ENCODE measurements at regions of chr11 and their contacts with region 1.

Region 1: DNA sequence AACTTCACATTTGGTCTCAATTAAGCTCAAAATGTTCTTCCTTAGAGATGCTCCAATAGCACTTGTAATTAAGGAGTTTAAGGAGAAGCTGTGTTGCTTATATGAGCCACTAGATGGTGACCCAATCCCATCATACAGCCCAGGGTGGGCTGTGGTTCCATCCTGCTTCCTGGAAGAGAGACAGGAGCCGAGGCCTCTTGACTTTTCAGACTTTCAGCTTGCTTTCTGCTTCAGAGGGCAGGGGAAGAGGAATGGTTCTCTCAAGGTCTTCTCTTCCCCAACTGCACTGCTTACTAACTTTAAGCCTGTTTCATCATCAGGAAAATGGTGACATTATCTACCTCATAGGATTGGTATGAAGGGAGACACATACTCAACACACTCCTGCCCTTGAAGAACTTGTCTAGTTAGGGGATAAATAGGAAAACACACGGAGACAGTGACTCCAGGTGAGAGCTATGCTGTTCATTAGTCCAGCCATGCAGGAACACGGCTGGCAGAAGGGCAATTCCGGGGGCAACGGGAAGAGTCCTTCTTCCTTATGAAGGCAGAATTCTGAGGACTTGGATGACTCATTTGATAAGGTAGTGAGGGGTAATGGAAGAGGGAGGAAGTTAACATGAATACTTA is 20.1 kb downstream of the TMEM218 start:
- DNase-seq: peak; percentile 59 to 71 (median 64)
- H3K4me3 ChIP-seq: no peak overlapping the region
- H3K27ac ChIP-seq: no peak overlapping the region
- H3K4me1 ChIP-seq: peaks cover 0 to 3% (median 0%) of the 10 kb centered on the region in 4 experiments
- H3K27me3 ChIP-seq: no peaks in the 10 kb centered on the region

Region 2: GRCh38 chr11:125001079-125001778 is 90.1 kb before region 1 on chr11:
- CTCF ChIA-PET with region 1: no interaction called
- POLR2A ChIA-PET with region 1: no interaction called
- DNase-seq: no peak
- H3K4me3 ChIP-seq: no peak overlapping the region
- H3K27ac ChIP-seq: no peak overlapping the region
- H3K4me1 ChIP-seq: no peaks in the 10 kb centered on the region
- H3K27me3 ChIP-seq: no peaks in the 10 kb centered on the region

Region 3: GRCh38 chr11:125111343-125112207 is 20.2 kb after region 1 on chr11 and contains the start of gene TMEM218:
- CTCF ChIA-PET with region 1: interaction called, 11 read pairs
- POLR2A ChIA-PET with region 1: interaction called, 3 read pairs
- DNase-seq: peak; percentile 98 to 99 (median 99)
- H3K4me3 ChIP-seq: peak within 1 kb of the TSS; percentile 70 to 95 (median 89)
- H3K27ac ChIP-seq: peak within 1 kb of the TSS; percentile 71 to 83
- H3K4me1 ChIP-seq: peaks cover 9 to 14% (median 12%) of the 10 kb centered on the region in 4 experiments
- H3K27me3 ChIP-seq: no peaks in the 10 kb centered on the region

Region 4: GRCh38 chr11:125123947-125124617 is 32.7 kb after region 1 on chr11:
- CTCF ChIA-PET with region 1: interaction called, 14 read pairs
- POLR2A ChIA-PET with region 1: no interaction called
- DNase-seq: peak in 2 of 3 donors; percentile 48 to 50
- H3K4me3 ChIP-seq: peak overlapping the region in 2 of 7 experiments; percentile 23 to 50
- H3K27ac ChIP-seq: no peak overlapping the region
- H3K4me1 ChIP-seq: peaks cover 0 to 14% (median 6%) of the 10 kb centered on the region in 4 experiments
- H3K27me3 ChIP-seq: peaks cover 0 to 29% (median 20%) of the 10 kb centered on the region in 5 experiments

Region 5: GRCh38 chr11:125141686-125142535 is 50.5 kb after region 1 on chr11:
- CTCF ChIA-PET with region 1: interaction called, 80 read pairs
- POLR2A ChIA-PET with region 1: no interaction called
- DNase-seq: peak; percentile 31 to 55 (median 51)
- H3K4me3 ChIP-seq: no peak overlapping the region
- H3K27ac ChIP-seq: no peak overlapping the region
- H3K4me1 ChIP-seq: no peaks in the 10 kb centered on the region
- H3K27me3 ChIP-seq: peaks cover 0 to 33% (median 19%) of the 10 kb centered on the region in 5 experiments

Region 6: DNA sequence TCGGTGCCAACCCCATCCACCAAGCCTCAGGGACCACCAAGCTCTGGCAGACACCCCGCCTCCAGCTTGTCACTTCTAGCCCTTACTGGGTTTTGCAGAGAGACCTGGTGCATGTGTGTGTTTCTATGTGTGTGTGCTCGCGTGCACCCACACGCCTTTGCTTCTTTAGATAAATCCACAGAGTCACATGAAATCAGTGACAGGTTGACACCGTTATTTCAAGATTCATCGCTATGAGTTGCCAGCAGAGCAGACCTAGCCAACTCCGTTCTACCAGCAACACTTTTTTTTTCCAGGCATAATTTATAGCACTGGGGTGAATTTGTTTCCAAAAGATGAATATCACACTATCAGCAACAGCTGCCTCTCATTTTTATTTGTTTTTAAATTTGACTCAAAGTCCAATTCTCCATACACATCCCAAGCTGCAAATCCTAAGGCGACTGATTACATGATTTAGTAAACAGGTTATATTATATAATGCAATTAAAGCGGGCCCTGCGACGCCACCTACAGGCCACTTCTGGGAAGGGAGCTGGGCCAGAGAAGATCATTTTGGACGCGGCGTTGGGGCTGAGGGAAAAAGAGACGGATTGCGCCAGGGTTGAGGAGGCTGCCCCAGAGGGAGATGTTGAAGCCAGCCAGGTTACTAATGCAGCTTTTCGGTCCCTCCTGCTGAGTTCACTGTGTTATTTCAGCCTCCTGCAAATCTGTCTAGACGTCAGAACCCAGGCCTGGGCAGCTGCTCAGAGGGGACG is 254.2 kb after region 1 on chr11:
- CTCF ChIA-PET with region 1: interaction called, 34 read pairs
- POLR2A ChIA-PET with region 1: no interaction called
- DNase-seq: peak; percentile 34 to 61 (median 49)
- H3K4me3 ChIP-seq: no peak overlapping the region
- H3K27ac ChIP-seq: no peak overlapping the region
- H3K4me1 ChIP-seq: no peaks in the 10 kb centered on the region
- H3K27me3 ChIP-seq: peaks cover 0 to 11% (median 5%) of the 10 kb centered on the region in 5 experiments

Measured in common myeloid progenitor, CD34-positive (primary cell).